WTC11 (cell line): ENCODE measurements at regions of chr9 and their contacts with region 1.

Region 1: GRCh38 chr9:36407122-36407723 is 7.2 kb upstream of the RNF38 start:
- DNase-seq: peak; percentile 43
- ATAC-seq: peak; percentile 87
- H3K4me3 Mint-ChIP-seq: no peak overlapping the region
- H3K27ac Mint-ChIP-seq: peak overlapping the region; percentile 87
- H3K4me1 Mint-ChIP-seq: peaks cover 15% of the 10 kb centered on the region
- H3K27me3 Mint-ChIP-seq: no peaks in the 10 kb centered on the region
- CTCF ChIP-seq: peak; percentile 87

Region 2: DNA sequence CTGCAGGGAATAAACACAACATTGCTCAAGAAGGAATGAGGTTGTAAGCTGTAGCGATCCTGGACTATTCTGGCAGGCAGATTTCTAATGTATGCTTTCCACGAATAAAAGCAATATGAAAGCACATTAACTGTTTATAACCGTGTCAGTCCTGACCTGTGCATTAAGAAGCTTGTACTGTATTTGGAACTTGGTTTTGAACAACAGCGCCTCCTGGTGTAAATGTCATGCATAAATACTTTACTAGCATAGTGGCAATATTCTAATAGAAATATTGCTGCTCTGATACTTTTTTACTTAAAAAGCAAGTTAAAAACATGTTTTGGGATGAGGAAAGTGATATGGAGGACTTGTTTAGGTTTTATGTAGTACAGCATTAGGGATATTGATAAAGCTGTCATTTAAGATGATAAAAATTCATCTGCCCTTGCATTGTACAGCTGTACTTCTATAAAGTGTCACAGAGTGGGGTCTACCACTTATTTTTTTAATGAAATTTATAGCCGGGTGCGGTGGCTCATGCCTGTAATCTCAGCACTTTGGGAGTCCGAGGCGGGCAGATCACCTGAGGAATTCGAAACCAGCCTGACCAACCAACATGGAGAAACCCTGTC is 78.3 kb before region 1 on chr9:
- CTCF ChIA-PET with region 1: no interaction called
- POLR2A ChIA-PET with region 1: no interaction called
- DNase-seq: no peak
- ATAC-seq: peak; percentile 62
- H3K4me3 Mint-ChIP-seq: no peak overlapping the region
- H3K27ac Mint-ChIP-seq: no peak overlapping the region
- H3K4me1 Mint-ChIP-seq: no peaks in the 10 kb centered on the region
- H3K27me3 Mint-ChIP-seq: no peaks in the 10 kb centered on the region
- CTCF ChIP-seq: peak; percentile 87

Region 3: GRCh38 chr9:36392489-36392888 is 14.7 kb before region 1 on chr9:
- CTCF ChIA-PET with region 1: interaction called, 10 read pairs
- POLR2A ChIA-PET with region 1: no interaction called
- DNase-seq: no peak
- ATAC-seq: no peak; the same call in 1 of the 2 replicates
- H3K4me3 Mint-ChIP-seq: no peak overlapping the region
- H3K27ac Mint-ChIP-seq: peak overlapping the region; percentile 78; the same call in 1 of the 2 replicates
- H3K4me1 Mint-ChIP-seq: peaks cover 58% of the 10 kb centered on the region
- H3K27me3 Mint-ChIP-seq: no peaks in the 10 kb centered on the region
- CTCF ChIP-seq: no peak

Region 4: DNA sequence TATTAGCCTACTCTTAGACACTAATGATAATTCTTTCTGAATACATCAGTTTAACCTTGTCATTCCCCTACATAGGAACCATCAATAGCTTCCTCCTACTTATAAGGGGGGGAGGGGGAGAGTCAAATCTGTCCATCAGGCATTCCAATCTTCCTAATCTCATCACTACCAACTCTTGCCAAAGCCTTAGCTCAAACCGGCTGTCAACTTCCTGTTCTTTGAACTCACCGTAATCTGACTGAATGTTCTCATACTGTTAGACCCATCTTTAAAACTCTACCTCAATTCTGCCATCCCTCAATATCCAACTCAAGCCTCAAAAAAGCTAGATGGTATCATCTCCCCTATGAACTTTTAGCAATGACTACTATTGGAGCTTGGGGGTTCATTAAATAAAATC is 34.7 kb after region 1 on chr9:
- CTCF ChIA-PET with region 1: interaction called, 48 read pairs
- POLR2A ChIA-PET with region 1: interaction called, 3 read pairs
- DNase-seq: no peak
- ATAC-seq: no peak
- H3K4me3 Mint-ChIP-seq: no peak overlapping the region
- H3K27ac Mint-ChIP-seq: no peak overlapping the region
- H3K4me1 Mint-ChIP-seq: peaks cover 63% of the 10 kb centered on the region
- H3K27me3 Mint-ChIP-seq: no peaks in the 10 kb centered on the region
- CTCF ChIP-seq: no peak

Region 5: DNA sequence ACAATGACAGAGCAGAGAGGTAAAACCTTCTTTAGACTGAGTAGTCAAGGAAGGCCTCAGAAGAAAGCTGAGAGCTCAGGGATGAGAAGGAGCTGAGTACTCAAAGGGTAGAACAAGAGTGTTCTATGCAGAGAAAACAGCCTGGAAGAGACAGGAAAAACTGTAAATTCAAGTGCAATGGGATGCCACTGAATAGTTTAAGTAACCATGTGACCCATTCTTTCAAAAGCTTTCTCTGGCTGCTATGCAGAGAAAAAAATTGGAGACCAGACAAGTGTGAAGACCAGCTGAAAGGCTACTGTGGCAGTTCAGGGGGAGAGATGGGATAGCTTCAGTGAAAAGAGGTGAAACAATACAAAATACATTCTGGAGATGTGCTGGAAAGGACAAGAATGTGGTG is 54.1 kb after region 1 on chr9:
- CTCF ChIA-PET with region 1: interaction called, 13 read pairs
- POLR2A ChIA-PET with region 1: no interaction called
- DNase-seq: no peak
- ATAC-seq: no peak
- H3K4me3 Mint-ChIP-seq: no peak overlapping the region
- H3K27ac Mint-ChIP-seq: peak overlapping the region; percentile 3
- H3K4me1 Mint-ChIP-seq: peaks cover 40% of the 10 kb centered on the region
- H3K27me3 Mint-ChIP-seq: no peaks in the 10 kb centered on the region
- CTCF ChIP-seq: no peak

Region 6: GRCh38 chr9:36542355-36542754 is 135.1 kb after region 1 on chr9:
- CTCF ChIA-PET with region 1: interaction called, 22 read pairs
- POLR2A ChIA-PET with region 1: no interaction called
- DNase-seq: peak; percentile 36
- ATAC-seq: peak; percentile 90
- H3K4me3 Mint-ChIP-seq: no peak overlapping the region
- H3K27ac Mint-ChIP-seq: 0 out of 2 replicates have a peak overlapping the region, but pooled peaks have one; percentile 32
- H3K4me1 Mint-ChIP-seq: peaks cover 4% of the 10 kb centered on the region
- H3K27me3 Mint-ChIP-seq: no peaks in the 10 kb centered on the region
- CTCF ChIP-seq: no peak

Region 7: DNA sequence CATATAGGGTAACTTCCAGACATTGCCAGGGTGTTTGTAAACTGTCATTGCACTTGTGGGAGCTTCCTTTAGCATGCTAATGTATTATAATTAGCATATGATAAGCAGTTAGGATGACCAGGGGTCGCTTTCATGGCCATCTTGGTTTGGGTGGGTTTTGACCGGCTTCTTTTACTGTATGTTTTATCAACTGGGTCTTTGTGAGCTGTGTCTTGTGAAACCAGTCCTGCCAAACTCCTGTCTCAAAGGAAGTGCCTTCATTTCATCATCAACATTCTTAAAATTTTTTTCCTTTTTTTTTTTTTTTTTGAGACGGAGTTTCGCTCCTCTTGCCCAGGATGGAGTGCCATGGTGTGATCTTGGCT is 153.6 kb after region 1 on chr9:
- CTCF ChIA-PET with region 1: interaction called, 51 read pairs
- POLR2A ChIA-PET with region 1: no interaction called
- DNase-seq: no peak
- ATAC-seq: peak; percentile 50
- H3K4me3 Mint-ChIP-seq: no peak overlapping the region
- H3K27ac Mint-ChIP-seq: no peak overlapping the region
- H3K4me1 Mint-ChIP-seq: peaks cover 12% of the 10 kb centered on the region
- H3K27me3 Mint-ChIP-seq: no peaks in the 10 kb centered on the region
- CTCF ChIP-seq: no peak

Region 8: DNA sequence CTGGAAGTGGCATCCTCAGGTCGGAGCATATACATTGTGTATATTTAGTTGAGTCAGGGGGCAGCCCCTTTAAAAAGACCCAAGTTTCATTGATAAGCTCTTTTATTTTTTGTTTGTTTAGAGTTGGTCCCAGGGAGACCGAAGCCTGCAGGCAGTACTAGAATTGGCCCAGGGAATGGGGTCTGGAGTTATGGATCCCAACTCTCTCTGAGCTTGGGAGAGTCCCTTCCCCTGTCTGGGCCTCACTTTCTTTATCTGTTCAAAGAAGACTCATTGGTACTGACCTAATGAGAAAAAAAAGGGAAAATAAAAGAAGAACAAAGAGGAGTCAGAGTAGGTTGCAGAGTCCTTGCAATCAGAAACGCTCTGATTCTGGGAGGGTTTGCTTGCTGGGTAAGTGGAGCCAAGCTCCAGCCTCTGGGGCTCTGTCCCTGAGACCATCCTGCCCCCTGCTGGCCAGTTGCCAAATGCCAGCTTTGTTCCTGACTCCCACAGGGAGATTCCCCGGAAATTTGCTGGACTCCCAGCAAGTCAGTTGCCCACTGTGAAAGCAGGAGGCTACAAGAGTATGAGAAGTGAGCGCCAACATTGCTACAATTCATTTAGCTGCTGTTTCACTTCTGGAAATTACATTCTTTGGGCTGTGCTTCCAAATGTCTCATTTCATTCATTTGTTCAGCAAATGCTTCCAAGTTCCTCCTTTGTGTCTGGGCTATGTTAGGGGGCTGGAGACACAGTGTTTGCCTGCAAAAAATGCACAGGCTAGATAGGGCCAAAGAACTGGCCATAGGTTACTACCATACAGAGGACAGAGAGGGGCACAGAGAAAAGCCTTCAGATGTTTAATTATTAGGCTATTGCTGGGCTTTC is 321.7 kb after region 1 on chr9:
- CTCF ChIA-PET with region 1: interaction called, 26 read pairs
- POLR2A ChIA-PET with region 1: no interaction called
- DNase-seq: peak; percentile 97
- ATAC-seq: peak; percentile 75
- H3K4me3 Mint-ChIP-seq: no peak overlapping the region
- H3K27ac Mint-ChIP-seq: no peak overlapping the region
- H3K4me1 Mint-ChIP-seq: peaks cover 27% of the 10 kb centered on the region
- H3K27me3 Mint-ChIP-seq: no peaks in the 10 kb centered on the region
- CTCF ChIP-seq: peak; percentile 93